Heart right ventricle (tissue), 16 donors: ENCODE measurements at regions of chr2 and their contacts with region 1.

Region 1: DNA sequence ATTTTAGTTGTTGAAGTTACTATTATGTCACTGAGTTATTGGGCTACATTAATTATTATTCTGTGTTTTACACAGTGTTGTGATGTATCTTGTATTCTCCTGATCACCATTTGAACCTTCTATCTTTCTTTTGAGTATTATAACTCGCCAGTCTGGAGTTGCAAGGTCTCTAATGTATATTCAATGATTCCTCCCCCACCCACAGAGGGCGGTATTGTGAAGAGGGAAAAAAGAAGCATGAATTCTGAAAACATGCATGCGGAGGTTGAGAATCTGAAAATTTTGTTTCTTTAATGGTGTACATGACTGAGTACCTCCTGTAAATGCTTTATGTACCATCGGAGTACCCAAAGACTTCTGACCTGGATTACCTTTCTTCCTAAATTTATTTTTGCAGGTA is 266.6 kb downstream of the NR4A2 start:
- DNase-seq: no peak
- ATAC-seq: no peak
- H3K4me3 ChIP-seq: no peak overlapping the region
- H3K27ac ChIP-seq: no peak overlapping the region
- H3K4me1 ChIP-seq: no peaks in the 10 kb centered on the region
- H3K27me3 ChIP-seq: no peaks in the 10 kb centered on the region
- CTCF ChIP-seq: no peak

Region 2: GRCh38 chr2:156077041-156077735 is 11.3 kb after region 1 on chr2:
- intact Hi-C with region 1: loop called in 1 of 10 experiments (anchors 1 kb)
- DNase-seq: no peak
- ATAC-seq: no peak
- H3K4me3 ChIP-seq: no peak overlapping the region
- H3K27ac ChIP-seq: no peak overlapping the region
- H3K4me1 ChIP-seq: no peaks in the 10 kb centered on the region
- H3K27me3 ChIP-seq: no peaks in the 10 kb centered on the region
- CTCF ChIP-seq: no peak